ENCODE measurements at regions of chr16 and their contacts with region 1.

Region 1: DNA sequence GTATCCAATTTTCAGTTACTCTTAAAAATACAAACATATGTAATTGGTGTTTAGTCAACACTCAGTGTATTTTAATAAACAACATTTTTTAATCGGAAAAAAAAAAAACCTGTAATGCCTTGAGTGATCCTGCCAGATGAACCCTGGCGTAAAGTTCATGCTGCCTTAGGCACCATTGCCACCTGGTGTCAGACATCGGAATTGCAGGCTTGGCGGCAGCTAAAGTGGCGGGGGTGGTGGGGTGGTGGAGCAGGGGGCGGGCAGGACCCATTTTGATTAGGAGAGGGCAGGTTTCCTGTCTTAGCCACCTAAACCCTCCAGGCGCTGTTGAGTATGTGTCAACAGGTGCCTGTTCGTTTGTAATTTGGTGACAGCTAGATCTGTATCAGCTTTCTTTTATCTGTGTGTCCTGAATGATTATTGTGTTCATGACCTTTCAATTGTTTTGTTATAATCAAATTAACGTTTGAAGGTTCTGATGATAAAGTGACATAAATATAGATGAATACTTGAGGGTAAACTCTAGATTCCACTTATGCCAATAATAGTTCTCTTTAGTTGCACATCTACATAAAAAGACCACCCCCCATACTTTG is 588.7 kb downstream of the CDH13 start:
- DNase-seq: peak; percentile 45 to 78
- H3K4me3 ChIP-seq: no peak overlapping the region
- H3K4me3 Mint-ChIP-seq: no peak overlapping the region
- H3K27ac Mint-ChIP-seq: no peak overlapping the region
- H3K4me1 ChIP-seq: 0 out of 2 replicates have a peak, but pooled peaks cover 4% of the 10 kb centered on the region
- H3K4me1 Mint-ChIP-seq: no peaks in the 10 kb centered on the region
- H3K27me3 ChIP-seq: no peaks in the 10 kb centered on the region
- H3K27me3 Mint-ChIP-seq: no peaks in the 10 kb centered on the region
- CTCF ChIP-seq: peak; percentile 93 to 95

Region 2: DNA sequence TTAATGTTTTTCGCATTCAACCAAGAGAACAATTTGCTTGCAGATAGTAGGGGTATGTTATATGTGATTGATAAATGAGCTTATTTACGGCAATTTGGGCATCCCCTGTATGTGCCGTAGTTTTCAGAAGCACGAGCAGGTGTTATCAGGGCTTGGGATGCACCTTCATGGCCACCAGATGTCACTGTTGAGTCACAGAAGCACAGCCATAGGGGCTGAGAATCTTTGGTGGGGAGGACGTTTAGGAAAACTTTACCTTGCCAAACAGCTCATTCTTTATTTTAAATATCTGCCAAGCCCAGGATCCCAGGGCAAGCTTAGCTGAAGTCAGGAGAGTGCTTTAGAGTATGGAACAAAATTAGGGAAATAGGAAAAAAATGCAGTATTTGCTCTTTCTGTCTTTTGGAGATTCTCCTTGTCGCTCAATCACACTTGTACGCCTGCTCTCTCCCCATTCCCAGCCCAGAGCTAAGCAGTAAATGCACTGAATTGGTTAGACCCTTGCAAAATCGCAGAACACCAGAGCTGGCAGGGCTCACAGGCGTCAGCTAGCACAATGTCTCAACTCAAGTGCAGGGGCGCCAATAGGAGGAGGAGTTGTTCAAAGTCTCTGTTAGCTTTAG is 951.9 kb before region 1 on chr16:
- CTCF ChIA-PET with region 1: no interaction called
- POLR2A ChIA-PET with region 1: no interaction called
- intact Hi-C with region 1: loop called (anchors 10 kb)
- DNase-seq: peak; percentile 61 to 73
- H3K4me3 ChIP-seq: no peak overlapping the region
- H3K4me3 Mint-ChIP-seq: no peak overlapping the region
- H3K27ac Mint-ChIP-seq: no peak overlapping the region
- H3K4me1 ChIP-seq: 0 out of 2 replicates have a peak, but pooled peaks cover 3% of the 10 kb centered on the region
- H3K4me1 Mint-ChIP-seq: peaks cover 4% of the 10 kb centered on the region
- H3K27me3 ChIP-seq: no peaks in the 10 kb centered on the region
- H3K27me3 Mint-ChIP-seq: peaks cover 22% of the 10 kb centered on the region
- CTCF ChIP-seq: peak; percentile 96

Region 3: DNA sequence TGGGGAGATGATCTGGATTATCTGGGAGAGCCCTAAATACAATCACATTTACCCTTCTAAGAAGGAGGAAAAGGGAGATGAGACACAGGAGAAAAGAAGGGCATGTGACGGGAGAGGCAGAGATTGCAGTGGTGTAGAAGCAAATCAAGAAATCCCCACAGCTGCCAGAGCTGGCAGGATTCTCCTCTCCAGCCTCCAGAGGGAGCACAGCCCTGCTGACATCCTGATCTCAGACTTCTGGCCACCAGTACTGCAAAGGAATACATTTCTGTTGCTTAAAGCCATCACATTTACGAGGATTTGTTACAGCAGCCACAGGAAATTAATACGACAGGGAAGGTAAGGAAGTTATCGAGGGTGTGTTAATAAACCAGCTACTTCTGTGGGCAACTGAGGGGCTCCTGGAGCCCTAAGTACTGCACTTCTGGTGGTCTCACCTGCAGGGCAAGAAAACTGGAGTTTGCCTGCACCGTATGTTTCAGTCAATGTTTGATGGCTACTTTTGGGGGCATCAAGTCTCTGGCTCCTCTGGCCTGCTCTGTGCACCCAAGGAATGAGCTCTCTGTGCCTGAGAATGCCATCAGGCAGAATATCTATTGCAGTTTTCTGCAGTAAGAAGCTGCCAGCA is 611.6 kb before region 1 on chr16:
- CTCF ChIA-PET with region 1: no interaction called
- POLR2A ChIA-PET with region 1: no interaction called
- intact Hi-C with region 1: loop called (anchors 10 kb)
- DNase-seq: peak; percentile 65 to 66
- H3K4me3 ChIP-seq: no peak overlapping the region
- H3K4me3 Mint-ChIP-seq: no peak overlapping the region
- H3K27ac Mint-ChIP-seq: no peak overlapping the region
- H3K4me1 ChIP-seq: peaks cover 23% of the 10 kb centered on the region
- H3K4me1 Mint-ChIP-seq: peaks cover 28% of the 10 kb centered on the region
- H3K27me3 ChIP-seq: no peaks in the 10 kb centered on the region
- H3K27me3 Mint-ChIP-seq: no peaks in the 10 kb centered on the region
- CTCF ChIP-seq: peak; percentile 64 to 88

Region 4: DNA sequence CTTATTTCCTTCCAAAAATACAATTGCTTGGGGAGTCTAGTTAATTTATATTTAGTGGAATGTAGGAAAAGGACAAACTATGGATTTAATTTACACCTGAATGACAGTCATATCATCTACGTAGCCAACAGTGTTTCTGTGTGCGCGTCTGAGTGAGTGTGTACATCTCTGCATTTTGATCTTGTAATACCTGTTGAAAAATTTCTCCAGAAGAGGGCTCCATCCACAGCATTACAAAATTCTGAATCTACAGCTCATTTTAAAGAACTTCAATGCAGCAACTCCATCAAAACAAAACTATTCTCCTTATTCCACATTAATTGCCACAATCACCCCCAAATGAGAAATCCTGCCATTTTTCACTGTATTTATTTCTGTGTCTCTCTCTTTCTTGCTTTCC is 584.8 kb before region 1 on chr16:
- CTCF ChIA-PET with region 1: interaction called, 6 read pairs
- POLR2A ChIA-PET with region 1: no interaction called
- intact Hi-C with region 1: loop called (anchors 1 kb)
- DNase-seq: no peak
- H3K4me3 ChIP-seq: no peak overlapping the region
- H3K4me3 Mint-ChIP-seq: no peak overlapping the region
- H3K27ac Mint-ChIP-seq: no peak overlapping the region
- H3K4me1 ChIP-seq: peaks cover 28% of the 10 kb centered on the region
- H3K4me1 Mint-ChIP-seq: peaks cover 30% of the 10 kb centered on the region
- H3K27me3 ChIP-seq: no peaks in the 10 kb centered on the region
- H3K27me3 Mint-ChIP-seq: peaks cover 8% of the 10 kb centered on the region
- CTCF ChIP-seq: peak; percentile 32 to 50

Region 5: DNA sequence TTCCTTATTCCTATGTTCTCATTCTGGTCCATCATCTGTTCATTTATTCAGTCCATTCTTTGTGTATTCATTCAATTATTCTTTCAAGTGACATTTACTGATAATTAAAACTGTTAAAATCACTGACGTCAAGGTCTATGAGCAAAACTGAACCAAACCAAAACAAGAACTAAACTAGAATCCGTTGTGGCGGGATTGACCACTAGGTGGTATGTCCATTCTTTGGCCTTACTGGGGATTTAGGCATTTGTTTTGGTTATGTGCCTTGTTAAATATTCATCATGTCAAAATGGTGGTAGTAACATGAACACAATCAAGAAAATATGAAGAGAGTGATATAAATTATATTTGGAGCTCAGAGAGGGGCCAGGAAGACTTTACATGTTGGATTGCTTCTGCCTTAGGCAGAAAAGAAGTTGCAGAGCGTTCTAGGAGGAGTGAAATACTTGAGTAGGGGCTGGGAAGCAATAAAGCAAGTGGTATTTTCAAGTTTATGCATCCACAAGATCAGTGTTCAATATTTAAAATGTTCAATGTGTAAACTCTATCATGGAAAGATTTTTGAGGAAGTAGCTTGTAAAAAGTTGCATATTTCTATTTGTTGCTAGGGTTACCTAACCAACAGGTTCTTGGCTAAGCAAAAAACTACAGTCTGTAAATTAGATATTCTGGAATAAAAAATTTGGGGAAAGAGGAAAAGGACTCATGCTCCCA is 459.8 kb before region 1 on chr16:
- CTCF ChIA-PET with region 1: no interaction called
- POLR2A ChIA-PET with region 1: no interaction called
- intact Hi-C with region 1: loop called (anchors 5 kb)
- DNase-seq: peak in 1 of 2 experiments; percentile 6
- H3K4me3 ChIP-seq: no peak overlapping the region
- H3K4me3 Mint-ChIP-seq: no peak overlapping the region
- H3K27ac Mint-ChIP-seq: no peak overlapping the region
- H3K4me1 ChIP-seq: no peaks in the 10 kb centered on the region
- H3K4me1 Mint-ChIP-seq: no peaks in the 10 kb centered on the region
- H3K27me3 ChIP-seq: no peaks in the 10 kb centered on the region
- H3K27me3 Mint-ChIP-seq: peaks cover 12% of the 10 kb centered on the region
- CTCF ChIP-seq: peak; percentile 28 to 36

Region 6: DNA sequence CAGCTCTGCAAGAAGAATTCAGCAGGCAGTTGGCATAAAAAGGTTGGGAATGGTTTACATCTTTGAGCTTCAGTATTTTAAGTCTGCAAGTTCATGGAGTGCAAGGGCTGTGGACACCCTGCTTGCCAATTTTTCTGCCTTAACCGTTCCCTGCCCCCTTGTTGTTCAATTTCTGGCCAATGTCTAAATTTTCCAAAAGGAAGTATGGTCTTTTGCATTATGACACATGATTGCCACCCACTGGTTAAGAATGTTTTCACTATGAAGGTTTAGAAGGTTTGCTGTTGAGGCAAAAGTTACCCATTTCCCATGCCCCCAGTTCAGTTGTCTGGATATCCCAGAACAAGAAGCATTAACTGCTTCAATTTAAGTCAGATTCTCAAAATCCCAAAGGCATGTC is 146.8 kb before region 1 on chr16:
- CTCF ChIA-PET with region 1: no interaction called
- POLR2A ChIA-PET with region 1: no interaction called
- intact Hi-C with region 1: loop called (anchors 1 kb)
- DNase-seq: no peak
- H3K4me3 ChIP-seq: no peak overlapping the region
- H3K4me3 Mint-ChIP-seq: no peak overlapping the region
- H3K27ac Mint-ChIP-seq: no peak overlapping the region
- H3K4me1 ChIP-seq: no peaks in the 10 kb centered on the region
- H3K4me1 Mint-ChIP-seq: no peaks in the 10 kb centered on the region
- H3K27me3 ChIP-seq: no peaks in the 10 kb centered on the region
- H3K27me3 Mint-ChIP-seq: peaks cover 4% of the 10 kb centered on the region
- CTCF ChIP-seq: no peak

Region 7: GRCh38 chr16:83113317-83113716 is 102.2 kb before region 1 on chr16:
- CTCF ChIA-PET with region 1: interaction called, 11 read pairs
- POLR2A ChIA-PET with region 1: no interaction called
- intact Hi-C with region 1: loop called (anchors 1 kb)
- DNase-seq: peak; percentile 46 to 56
- H3K4me3 ChIP-seq: no peak overlapping the region
- H3K4me3 Mint-ChIP-seq: no peak overlapping the region
- H3K27ac Mint-ChIP-seq: no peak overlapping the region
- H3K4me1 ChIP-seq: no peaks in the 10 kb centered on the region
- H3K4me1 Mint-ChIP-seq: no peaks in the 10 kb centered on the region
- H3K27me3 ChIP-seq: no peaks in the 10 kb centered on the region; the same call in 1 of the 2 replicates
- H3K27me3 Mint-ChIP-seq: peaks cover 2% of the 10 kb centered on the region
- CTCF ChIP-seq: peak; percentile 70 to 81

Region 8: GRCh38 chr16:83305092-83305491 is 89.6 kb after region 1 on chr16:
- CTCF ChIA-PET with region 1: no interaction called
- POLR2A ChIA-PET with region 1: no interaction called
- intact Hi-C with region 1: no loop called
- DNase-seq: no peak
- H3K4me3 ChIP-seq: no peak overlapping the region
- H3K4me3 Mint-ChIP-seq: no peak overlapping the region
- H3K27ac Mint-ChIP-seq: no peak overlapping the region
- H3K4me1 ChIP-seq: no peaks in the 10 kb centered on the region
- H3K4me1 Mint-ChIP-seq: no peaks in the 10 kb centered on the region
- H3K27me3 ChIP-seq: peaks cover 3% of the 10 kb centered on the region
- H3K27me3 Mint-ChIP-seq: peaks cover 21% of the 10 kb centered on the region
- CTCF ChIP-seq: no peak

Measured in Caco-2 (cell line).